Activated B cell treated with CpG ODN at 0.5 μM for 24 hours (primary cell): ENCODE measurements at regions of chr3 and their contacts with region 1.

Region 1: DNA sequence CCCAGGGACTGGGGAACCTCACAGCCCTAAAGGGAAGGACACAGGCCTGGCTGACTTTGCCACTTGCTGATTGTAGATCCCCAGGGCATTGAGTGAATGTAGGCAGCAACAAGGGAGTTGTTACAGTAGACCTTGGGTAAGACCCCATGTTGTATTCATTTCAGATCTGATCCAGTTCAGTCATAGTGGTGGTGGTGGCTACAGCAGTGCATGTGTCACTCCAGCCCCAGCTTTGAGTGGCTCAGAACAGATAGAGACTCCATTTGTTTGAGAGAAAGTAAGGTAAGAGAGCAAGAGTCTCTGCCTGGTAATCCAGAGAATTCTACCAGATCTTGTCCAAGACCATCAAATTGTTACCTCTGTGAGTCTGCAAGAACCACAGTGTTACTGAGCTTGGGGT is 278.7 kb upstream of the SATB1 start:
- DNase-seq: no peak
- ATAC-seq: no peak
- H3K4me3 Mint-ChIP-seq: no peak overlapping the region
- H3K27ac Mint-ChIP-seq: no peak overlapping the region
- H3K4me1 Mint-ChIP-seq: no peaks in the 10 kb centered on the region
- H3K27me3 Mint-ChIP-seq: no peaks in the 10 kb centered on the region
- CTCF ChIP-seq: no peak

Region 2: GRCh38 chr3:18559331-18559842 is 144.4 kb before region 1 on chr3:
- CTCF ChIA-PET with region 1: no interaction called
- POLR2A ChIA-PET with region 1: no interaction called
- intact Hi-C with region 1: no loop called
- DNase-seq: no peak
- ATAC-seq: peak; percentile 65
- H3K4me3 Mint-ChIP-seq: no peak overlapping the region
- H3K27ac Mint-ChIP-seq: no peak overlapping the region
- H3K4me1 Mint-ChIP-seq: peaks cover 27% of the 10 kb centered on the region
- H3K27me3 Mint-ChIP-seq: no peaks in the 10 kb centered on the region
- CTCF ChIP-seq: no peak

Region 3: DNA sequence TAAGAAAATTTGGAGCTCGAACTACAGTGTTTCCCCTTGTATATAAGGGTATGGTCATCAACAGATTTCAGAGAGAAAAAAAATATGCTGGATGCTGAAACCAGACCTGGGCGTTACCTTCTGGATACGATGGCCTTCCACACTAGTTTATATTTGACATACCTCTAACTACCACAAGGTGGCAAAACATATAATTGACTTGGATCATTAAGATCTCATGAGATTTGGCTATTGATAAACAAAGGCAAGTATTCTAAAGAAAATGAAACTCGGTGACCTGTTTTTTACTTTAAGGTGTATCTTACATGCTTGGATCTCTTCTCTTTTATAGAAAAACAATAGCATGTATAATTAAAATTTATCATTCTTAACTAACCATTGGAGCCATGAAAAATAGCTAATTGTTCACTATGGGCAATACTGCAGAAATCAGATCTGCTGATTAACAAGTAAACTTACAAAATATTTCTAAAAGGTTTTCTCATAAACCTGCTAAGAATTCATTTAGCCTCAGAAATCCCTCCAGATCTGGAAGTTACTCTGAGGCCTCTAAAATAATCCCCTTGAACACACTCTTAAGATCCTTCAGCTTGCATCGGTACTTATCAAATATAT is 143.9 kb after region 1 on chr3:
- CTCF ChIA-PET with region 1: no interaction called
- POLR2A ChIA-PET with region 1: no interaction called
- intact Hi-C with region 1: no loop called
- DNase-seq: no peak
- ATAC-seq: no peak
- H3K4me3 Mint-ChIP-seq: no peak overlapping the region
- H3K27ac Mint-ChIP-seq: no peak overlapping the region
- H3K4me1 Mint-ChIP-seq: peaks cover 11% of the 10 kb centered on the region
- H3K27me3 Mint-ChIP-seq: no peaks in the 10 kb centered on the region
- CTCF ChIP-seq: no peak

Region 4: GRCh38 chr3:20503394-20504082 is 1799.7 kb after region 1 on chr3:
- CTCF ChIA-PET with region 1: no interaction called
- POLR2A ChIA-PET with region 1: no interaction called
- intact Hi-C with region 1: loop called (anchors 5 kb)
- DNase-seq: no peak
- ATAC-seq: no peak
- H3K4me3 Mint-ChIP-seq: no peak overlapping the region
- H3K27ac Mint-ChIP-seq: no peak overlapping the region
- H3K4me1 Mint-ChIP-seq: no peaks in the 10 kb centered on the region
- H3K27me3 Mint-ChIP-seq: no peaks in the 10 kb centered on the region
- CTCF ChIP-seq: no peak